Caco-2 (cell line): ENCODE measurements at regions of chr7 and their contacts with region 1.

Region 1: DNA sequence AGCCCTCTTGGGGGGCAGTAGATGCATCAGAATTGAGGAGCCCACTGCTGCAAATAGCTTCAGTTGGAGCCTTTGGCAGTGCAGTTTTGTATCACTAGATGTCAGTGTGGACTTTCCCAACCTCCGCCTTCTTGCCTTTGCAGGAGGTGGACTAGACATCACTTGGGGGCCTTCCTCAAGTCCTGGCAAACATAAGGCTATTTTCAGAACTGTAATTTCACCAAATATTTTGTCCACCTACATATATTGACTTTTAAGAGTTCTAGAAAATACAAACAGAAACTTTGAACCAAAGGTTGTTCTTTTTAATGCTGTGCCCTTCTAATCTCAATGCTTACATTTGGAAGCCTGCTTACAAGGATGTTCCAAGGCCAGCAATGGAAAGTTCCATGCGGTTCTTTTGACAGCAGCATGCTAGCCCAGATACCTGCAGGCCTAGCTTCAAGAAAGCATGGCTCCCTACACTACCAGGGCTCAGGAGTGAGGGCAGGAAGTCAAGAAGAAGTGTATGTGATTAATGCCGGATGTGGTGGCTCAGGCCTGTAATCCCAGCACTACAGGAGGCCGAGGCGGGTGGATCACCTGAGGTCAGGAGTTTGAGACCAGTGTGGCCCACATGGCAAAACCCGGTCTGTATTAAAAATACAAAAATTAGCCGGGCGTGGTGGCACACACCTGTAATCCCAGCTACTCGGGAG is 8.0 kb upstream of the ZNRF2 start:
- DNase-seq: peak; percentile 61 to 69
- H3K4me3 ChIP-seq: no peak overlapping the region
- H3K4me3 Mint-ChIP-seq: no peak overlapping the region
- H3K27ac Mint-ChIP-seq: no peak overlapping the region
- H3K4me1 ChIP-seq: no peaks in the 10 kb centered on the region
- H3K4me1 Mint-ChIP-seq: peaks cover 4% of the 10 kb centered on the region
- H3K27me3 ChIP-seq: no peaks in the 10 kb centered on the region
- H3K27me3 Mint-ChIP-seq: no peaks in the 10 kb centered on the region
- CTCF ChIP-seq: peak; percentile 72 to 76

Region 2: DNA sequence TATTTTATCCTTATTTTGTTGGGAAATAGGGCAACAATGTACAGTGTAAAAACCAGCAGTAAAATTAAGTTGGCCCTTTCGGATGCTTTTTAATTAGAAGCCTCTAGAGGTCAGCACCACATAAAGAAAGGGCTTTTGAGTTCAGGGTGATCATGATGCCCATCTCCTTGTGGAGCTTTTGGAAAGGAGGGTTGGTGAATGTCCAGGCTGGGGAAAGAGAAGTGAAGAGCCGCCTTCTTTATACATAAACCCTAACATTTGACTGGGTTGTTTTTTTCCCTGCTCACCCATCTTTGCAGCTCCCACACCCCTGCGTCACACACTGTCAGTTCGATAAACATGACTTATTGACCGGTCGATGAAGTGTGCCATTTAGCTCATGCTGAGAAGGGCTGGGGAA is 111.8 kb before region 1 on chr7:
- CTCF ChIA-PET with region 1: interaction called, 6 read pairs
- POLR2A ChIA-PET with region 1: no interaction called
- intact Hi-C with region 1: loop called (anchors 2 kb)
- DNase-seq: peak in 1 of 2 experiments; percentile 46
- H3K4me3 ChIP-seq: no peak overlapping the region
- H3K4me3 Mint-ChIP-seq: no peak overlapping the region
- H3K27ac Mint-ChIP-seq: no peak overlapping the region
- H3K4me1 ChIP-seq: peaks cover 15% of the 10 kb centered on the region; the same call in 1 of the 2 replicates
- H3K4me1 Mint-ChIP-seq: no peaks in the 10 kb centered on the region
- H3K27me3 ChIP-seq: no peaks in the 10 kb centered on the region
- H3K27me3 Mint-ChIP-seq: peaks cover 13% of the 10 kb centered on the region
- CTCF ChIP-seq: peak; percentile 25 to 59

Region 3: GRCh38 chr7:30225863-30226613 is 50.3 kb before region 1 on chr7:
- CTCF ChIA-PET with region 1: no interaction called
- POLR2A ChIA-PET with region 1: no interaction called
- intact Hi-C with region 1: loop called (anchors 2 kb)
- DNase-seq: no peak
- H3K4me3 ChIP-seq: no peak overlapping the region
- H3K4me3 Mint-ChIP-seq: no peak overlapping the region
- H3K27ac Mint-ChIP-seq: no peak overlapping the region
- H3K4me1 ChIP-seq: 0 out of 2 replicates have a peak, but pooled peaks cover 5% of the 10 kb centered on the region
- H3K4me1 Mint-ChIP-seq: peaks cover 15% of the 10 kb centered on the region
- H3K27me3 ChIP-seq: no peaks in the 10 kb centered on the region; the same call in 1 of the 2 replicates
- H3K27me3 Mint-ChIP-seq: peaks cover 3% of the 10 kb centered on the region
- CTCF ChIP-seq: no peak

Region 4: GRCh38 chr7:30352169-30352568 is 75.8 kb after region 1 on chr7:
- CTCF ChIA-PET with region 1: interaction called, 3 read pairs
- POLR2A ChIA-PET with region 1: no interaction called
- intact Hi-C with region 1: loop called (anchors 1 kb)
- DNase-seq: no peak
- H3K4me3 ChIP-seq: no peak overlapping the region
- H3K4me3 Mint-ChIP-seq: no peak overlapping the region
- H3K27ac Mint-ChIP-seq: no peak overlapping the region
- H3K4me1 ChIP-seq: no peaks in the 10 kb centered on the region
- H3K4me1 Mint-ChIP-seq: peaks cover 6% of the 10 kb centered on the region
- H3K27me3 ChIP-seq: no peaks in the 10 kb centered on the region
- H3K27me3 Mint-ChIP-seq: no peaks in the 10 kb centered on the region
- CTCF ChIP-seq: no peak

Region 5: DNA sequence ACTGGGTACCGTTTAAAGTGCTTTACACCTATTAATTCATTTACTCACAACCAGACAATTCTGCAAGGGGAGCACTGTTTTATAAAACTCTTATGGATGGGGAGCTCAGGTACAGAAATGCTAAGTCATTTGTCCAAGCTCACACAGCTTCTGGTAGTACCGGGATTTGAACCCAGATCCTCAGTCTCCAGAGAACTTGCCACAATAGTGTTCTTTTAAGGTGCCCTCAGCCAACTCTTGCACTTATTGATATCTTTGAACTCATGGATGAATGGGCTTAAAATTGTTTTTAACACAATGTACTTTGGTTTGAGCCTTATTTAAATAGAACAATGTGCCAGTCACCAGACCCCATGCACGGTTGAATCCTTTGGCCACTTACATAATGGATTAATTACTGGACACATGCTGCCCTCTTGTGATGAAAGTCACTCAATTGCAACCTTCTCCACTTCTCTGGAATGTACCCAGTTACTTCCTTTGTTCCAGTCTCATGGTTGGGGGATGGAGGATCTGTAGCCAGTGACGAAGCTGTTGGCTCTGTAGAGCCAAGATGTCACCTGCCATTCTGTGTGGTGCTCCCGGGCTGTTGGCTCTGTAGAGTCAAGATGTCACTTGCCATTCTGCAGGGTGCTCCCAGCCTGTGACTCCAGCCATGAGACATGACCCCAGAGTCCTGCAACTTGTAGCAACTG is 136.6 kb after region 1 on chr7:
- CTCF ChIA-PET with region 1: interaction called, 8 read pairs
- POLR2A ChIA-PET with region 1: no interaction called
- intact Hi-C with region 1: loop called (anchors 1 kb)
- DNase-seq: peak in 1 of 2 experiments; percentile 46
- H3K4me3 ChIP-seq: no peak overlapping the region
- H3K4me3 Mint-ChIP-seq: no peak overlapping the region
- H3K27ac Mint-ChIP-seq: no peak overlapping the region
- H3K4me1 ChIP-seq: no peaks in the 10 kb centered on the region
- H3K4me1 Mint-ChIP-seq: no peaks in the 10 kb centered on the region
- H3K27me3 ChIP-seq: no peaks in the 10 kb centered on the region
- H3K27me3 Mint-ChIP-seq: no peaks in the 10 kb centered on the region
- CTCF ChIP-seq: no peak

Region 6: DNA sequence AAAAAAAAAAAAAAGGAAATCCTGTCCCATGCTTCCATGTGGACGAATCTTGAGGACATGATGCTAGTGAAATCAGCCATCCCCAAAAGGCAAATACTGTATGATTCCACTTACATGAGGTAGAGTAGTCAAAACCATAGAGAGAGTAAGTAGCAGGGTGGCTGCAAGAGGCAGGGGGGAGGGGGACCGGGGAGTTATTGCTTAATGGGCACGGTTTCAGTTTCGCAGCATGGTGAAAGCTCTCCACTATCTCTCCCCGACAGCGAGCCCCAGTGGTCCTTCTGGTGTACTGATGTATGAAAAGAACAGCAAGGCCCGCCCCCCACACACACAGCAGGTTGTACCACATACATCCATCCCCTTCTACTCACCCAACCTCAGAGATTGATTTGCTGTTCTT is 169.4 kb after region 1 on chr7:
- CTCF ChIA-PET with region 1: no interaction called
- POLR2A ChIA-PET with region 1: no interaction called
- intact Hi-C with region 1: no loop called
- DNase-seq: peak; percentile 32 to 47
- H3K4me3 ChIP-seq: no peak overlapping the region
- H3K4me3 Mint-ChIP-seq: no peak overlapping the region
- H3K27ac Mint-ChIP-seq: no peak overlapping the region
- H3K4me1 ChIP-seq: no peaks in the 10 kb centered on the region
- H3K4me1 Mint-ChIP-seq: no peaks in the 10 kb centered on the region
- H3K27me3 ChIP-seq: no peaks in the 10 kb centered on the region
- H3K27me3 Mint-ChIP-seq: no peaks in the 10 kb centered on the region
- CTCF ChIP-seq: no peak